AG04450 (cell line): ENCODE measurements at regions of chr12 and their contacts with region 1.

Region 1: DNA sequence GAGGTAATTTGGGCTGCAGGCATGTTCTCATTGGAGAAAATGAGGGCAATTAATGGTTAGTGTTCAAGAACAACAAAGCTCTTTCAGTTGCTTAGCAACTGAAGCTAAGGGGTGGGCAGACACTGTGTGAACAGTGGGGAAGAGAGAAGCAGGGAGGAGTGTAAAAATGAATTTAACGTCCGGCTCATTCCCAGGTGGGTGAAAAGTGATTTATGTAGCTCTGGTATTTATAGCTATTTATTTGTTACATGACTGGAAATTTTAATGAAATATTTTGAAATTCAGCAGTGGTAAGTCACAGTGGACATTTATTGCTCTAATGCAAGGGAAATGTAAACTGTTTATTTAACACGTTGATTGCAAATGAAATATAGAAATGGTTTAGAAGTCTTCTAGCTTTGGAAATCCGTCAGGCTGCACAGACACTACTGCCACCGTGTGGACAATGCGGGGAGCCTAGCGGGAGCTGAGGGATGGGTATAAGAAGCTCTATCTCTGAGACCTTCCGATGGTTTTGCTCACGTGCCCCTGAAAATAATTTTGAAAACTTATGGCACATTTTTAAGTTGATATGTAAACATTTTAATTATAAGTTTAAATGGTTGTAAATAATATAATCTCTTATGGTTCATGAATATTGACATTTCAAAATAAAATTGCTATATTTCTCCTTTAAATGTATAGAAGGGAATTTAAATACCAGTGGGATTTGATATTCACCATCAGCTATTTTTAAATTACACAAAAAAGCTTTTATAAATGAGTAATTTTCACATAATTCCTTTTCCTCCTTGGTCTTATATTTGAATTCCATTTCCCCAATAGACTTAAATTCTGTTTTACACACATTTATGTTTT is 54.4 kb downstream of the E2F7 start:
- DNase-seq: peak; percentile 72
- H3K4me3 ChIP-seq: no peak overlapping the region
- H3K27ac ChIP-seq: no peak overlapping the region
- H3K27me3 ChIP-seq: no peaks in the 10 kb centered on the region
- CTCF ChIP-seq: peak; percentile 100

Region 2: GRCh38 chr12:76621582-76622024 is 389.3 kb before region 1 on chr12:
- CTCF ChIA-PET with region 1: interaction called, 69 read pairs
- POLR2A ChIA-PET with region 1: no interaction called
- DNase-seq: peak; percentile 36
- H3K4me3 ChIP-seq: no peak overlapping the region
- H3K27ac ChIP-seq: no peak overlapping the region
- H3K27me3 ChIP-seq: no peaks in the 10 kb centered on the region
- CTCF ChIP-seq: peak; percentile 91

Region 3: DNA sequence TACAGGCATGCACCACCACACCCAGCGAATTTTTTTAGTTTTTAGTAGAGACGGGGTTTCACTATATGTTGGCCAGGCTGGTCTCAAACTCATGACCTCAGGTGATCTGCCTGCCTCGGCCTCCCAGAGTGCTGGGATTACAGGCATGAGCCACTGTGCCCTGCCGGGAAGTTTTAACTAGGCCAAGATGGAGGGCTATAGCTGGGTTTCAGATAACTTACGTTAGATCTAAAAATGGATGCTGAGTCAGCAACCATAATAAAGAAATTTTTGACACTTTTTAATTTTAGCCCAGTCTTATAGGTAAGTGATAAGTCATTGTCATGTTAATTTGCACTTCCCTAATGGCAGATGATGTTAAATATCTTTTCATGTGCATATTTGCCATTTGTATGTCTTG is 232.6 kb before region 1 on chr12:
- CTCF ChIA-PET with region 1: no interaction called
- POLR2A ChIA-PET with region 1: no interaction called
- DNase-seq: no peak
- H3K4me3 ChIP-seq: no peak overlapping the region
- H3K27ac ChIP-seq: no peak overlapping the region
- H3K27me3 ChIP-seq: no peaks in the 10 kb centered on the region
- CTCF ChIP-seq: no peak

Region 4: GRCh38 chr12:76820888-76821482 is 189.9 kb before region 1 on chr12:
- CTCF ChIA-PET with region 1: interaction called, 29 read pairs
- POLR2A ChIA-PET with region 1: no interaction called
- DNase-seq: peak; percentile 3
- H3K4me3 ChIP-seq: no peak overlapping the region
- H3K27ac ChIP-seq: no peak overlapping the region
- H3K27me3 ChIP-seq: no peaks in the 10 kb centered on the region
- CTCF ChIP-seq: peak; percentile 77

Region 5: DNA sequence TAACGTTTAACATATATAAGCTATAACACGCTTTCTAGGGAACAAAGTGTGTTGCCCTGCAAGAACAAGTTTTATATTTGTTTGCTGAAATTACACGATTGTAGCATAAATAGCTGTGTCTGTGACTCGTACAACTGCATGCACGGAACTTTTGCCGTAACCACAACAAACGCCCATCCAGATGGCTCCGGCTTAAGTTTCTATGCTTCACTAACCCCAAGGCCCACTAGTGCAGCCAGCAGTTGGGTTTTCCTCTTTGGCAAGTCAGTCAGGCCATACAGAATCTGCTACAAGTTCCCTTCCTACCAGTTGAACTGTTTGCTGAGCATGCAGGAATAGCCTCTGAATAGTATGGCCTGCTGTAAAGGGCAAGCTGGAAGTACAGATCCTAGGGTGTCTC is 144.2 kb before region 1 on chr12:
- CTCF ChIA-PET with region 1: interaction called, 11 read pairs
- POLR2A ChIA-PET with region 1: interaction called, 7 read pairs
- DNase-seq: no peak
- H3K4me3 ChIP-seq: no peak overlapping the region
- H3K27ac ChIP-seq: no peak overlapping the region
- H3K27me3 ChIP-seq: no peaks in the 10 kb centered on the region
- CTCF ChIP-seq: no peak

Region 6: GRCh38 chr12:76940671-76941445 is 70.1 kb before region 1 on chr12:
- CTCF ChIA-PET with region 1: interaction called, 10 read pairs
- POLR2A ChIA-PET with region 1: no interaction called
- DNase-seq: no peak
- H3K4me3 ChIP-seq: no peak overlapping the region
- H3K27ac ChIP-seq: no peak overlapping the region
- H3K27me3 ChIP-seq: no peaks in the 10 kb centered on the region
- CTCF ChIP-seq: no peak

Region 7: GRCh38 chr12:77042833-77043232 is 31.9 kb after region 1 on chr12:
- CTCF ChIA-PET with region 1: interaction called, 17 read pairs
- POLR2A ChIA-PET with region 1: no interaction called
- DNase-seq: no peak
- H3K4me3 ChIP-seq: no peak overlapping the region
- H3K27ac ChIP-seq: no peak overlapping the region
- H3K27me3 ChIP-seq: no peaks in the 10 kb centered on the region
- CTCF ChIP-seq: no peak

Region 8: GRCh38 chr12:77097846-77098245 is 86.9 kb after region 1 on chr12:
- CTCF ChIA-PET with region 1: no interaction called
- POLR2A ChIA-PET with region 1: no interaction called
- DNase-seq: no peak
- H3K4me3 ChIP-seq: no peak overlapping the region
- H3K27ac ChIP-seq: no peak overlapping the region
- H3K27me3 ChIP-seq: no peaks in the 10 kb centered on the region
- CTCF ChIP-seq: no peak

Region 9: GRCh38 chr12:77429426-77429825 is 418.5 kb after region 1 on chr12:
- CTCF ChIA-PET with region 1: no interaction called
- POLR2A ChIA-PET with region 1: no interaction called
- DNase-seq: no peak
- H3K4me3 ChIP-seq: no peak overlapping the region
- H3K27ac ChIP-seq: no peak overlapping the region
- H3K27me3 ChIP-seq: no peaks in the 10 kb centered on the region
- CTCF ChIP-seq: no peak